Esophagus muscularis mucosa (tissue), 4 donors: ENCODE measurements at regions of chr6 and their contacts with region 1.

Region 1: DNA sequence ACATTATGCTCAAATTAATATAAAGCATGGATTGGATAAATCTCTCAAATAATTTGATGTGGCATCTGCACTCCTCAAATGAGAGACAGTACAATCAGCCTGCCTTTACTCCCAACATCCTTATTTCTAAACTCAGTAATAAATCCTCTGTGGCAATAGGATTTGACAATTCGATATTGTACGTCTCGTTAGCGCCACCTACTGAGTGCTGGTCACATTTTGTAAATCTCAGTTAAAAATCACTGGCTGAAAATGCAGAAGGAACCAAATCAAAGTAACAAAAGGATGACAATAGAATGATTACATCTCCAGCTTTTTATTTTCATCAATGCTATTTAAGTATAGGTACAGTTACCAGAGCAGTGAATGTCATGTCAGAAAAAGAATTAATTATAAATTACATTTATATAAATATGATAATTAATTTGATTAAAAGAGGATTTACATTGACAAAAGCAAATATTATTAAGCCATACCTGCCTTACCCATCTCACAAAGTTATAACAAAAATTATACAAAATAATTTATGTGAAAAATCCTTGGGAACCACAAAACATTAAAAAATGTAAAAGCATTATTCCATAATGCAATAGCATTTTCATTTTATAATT is 20.2 kb upstream of the GJE1 start:
- DNase-seq: no peak
- H3K4me3 ChIP-seq: no peak overlapping the region
- H3K27ac ChIP-seq: no peak overlapping the region
- H3K4me1 ChIP-seq: no peaks in the 10 kb centered on the region
- H3K27me3 ChIP-seq: no peaks in the 10 kb centered on the region
- CTCF ChIP-seq: peak; percentile 46 to 69 (median 64)
- EP300 ChIP-seq: no peak
- POLR2A ChIP-seq: no peak

Region 2: GRCh38 chr6:141677598-141678211 is 434.9 kb before region 1 on chr6:
- intact Hi-C with region 1: loop called (anchors 10 kb)
- DNase-seq: no peak
- H3K4me3 ChIP-seq: no peak overlapping the region
- H3K27ac ChIP-seq: no peak overlapping the region
- H3K4me1 ChIP-seq: no peaks in the 10 kb centered on the region
- H3K27me3 ChIP-seq: no peaks in the 10 kb centered on the region
- CTCF ChIP-seq: peak in 2 of 3 experiments; percentile 28 to 44
- EP300 ChIP-seq: no peak
- POLR2A ChIP-seq: no peak

Region 3: GRCh38 chr6:141988954-141989705 is 123.4 kb before region 1 on chr6:
- intact Hi-C with region 1: loop called (anchors 10 kb)
- DNase-seq: no peak
- H3K4me3 ChIP-seq: no peak overlapping the region
- H3K27ac ChIP-seq: no peak overlapping the region
- H3K4me1 ChIP-seq: no peaks in the 10 kb centered on the region
- H3K27me3 ChIP-seq: no peaks in the 10 kb centered on the region
- CTCF ChIP-seq: peak; percentile 26 to 60 (median 48)
- EP300 ChIP-seq: no peak
- POLR2A ChIP-seq: no peak